ENCODE measurements at regions of chr11 and their contacts with region 1.

Region 1: DNA sequence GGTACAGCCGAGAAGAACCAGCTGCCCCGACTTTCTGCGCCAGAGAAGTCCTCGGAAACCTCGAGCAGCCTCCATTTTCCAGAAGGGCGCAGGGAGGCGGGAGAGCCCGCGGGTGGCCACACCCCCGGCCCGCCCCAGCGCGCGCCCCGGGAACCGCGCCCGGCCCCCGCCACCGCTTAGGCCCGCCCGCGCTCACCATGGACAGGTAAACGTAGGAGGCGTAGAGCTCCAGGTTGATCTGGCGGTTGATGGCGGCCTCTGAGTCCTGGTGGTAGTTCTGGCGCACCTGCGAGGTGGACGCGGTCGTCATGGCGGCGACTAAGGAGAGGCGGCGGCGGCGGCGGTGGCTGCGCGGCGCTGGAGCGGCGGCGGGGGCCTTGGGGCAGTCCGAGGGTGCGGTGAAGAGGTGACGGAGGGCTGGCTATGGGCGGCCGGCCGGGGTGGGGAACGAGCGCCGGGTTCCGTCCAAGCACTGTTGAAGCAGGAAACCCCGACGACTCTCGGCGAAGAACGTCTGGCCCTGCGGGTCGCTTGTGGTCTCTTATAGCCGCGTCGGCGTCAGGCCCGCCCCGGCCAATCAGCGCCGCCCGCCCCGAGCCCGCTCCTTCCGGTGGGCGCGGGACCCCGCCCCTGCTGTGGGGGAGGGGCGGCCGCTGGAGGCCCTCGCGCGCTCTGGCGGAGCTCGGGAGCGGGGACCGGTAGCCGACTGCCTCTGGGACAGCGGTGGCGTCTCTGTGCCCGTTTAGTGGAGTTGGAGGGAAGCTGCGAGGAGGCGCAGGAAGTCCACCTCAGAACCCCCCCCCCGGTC is at the start of gene FTH1:
- DNase-seq: peak; percentile 89
- H3K4me3 ChIP-seq: peak within 1 kb of the TSS; percentile 98 to 99 (median 99)
- H3K27ac ChIP-seq: peak within 1 kb of the TSS; percentile 60
- H3K4me1 ChIP-seq: peaks cover 63% of the 10 kb centered on the region
- H3K27me3 ChIP-seq: no peaks in the 10 kb centered on the region
- CTCF ChIP-seq: no peak
- POLR2A ChIP-seq: peak; percentile 97
- total RNA-seq, gene FTH1: 2,371 and 2,501 TPM in 2 replicates

Region 2: GRCh38 chr11:61516675-61517572 is 450.4 kb before region 1 on chr11:
- CTCF ChIA-PET with region 1: no interaction called
- POLR2A ChIA-PET with region 1: no interaction called
- dilution Hi-C with region 1: no loop called
- intact Hi-C with region 1: no loop called
- DNase-seq: peak; percentile 42
- H3K4me3 ChIP-seq: no peak overlapping the region
- H3K27ac ChIP-seq: no peak overlapping the region
- H3K4me1 ChIP-seq: peaks cover 4% of the 10 kb centered on the region
- H3K27me3 ChIP-seq: no peaks in the 10 kb centered on the region
- CTCF ChIP-seq: peak; percentile 96 to 97
- POLR2A ChIP-seq: no peak

Region 3: DNA sequence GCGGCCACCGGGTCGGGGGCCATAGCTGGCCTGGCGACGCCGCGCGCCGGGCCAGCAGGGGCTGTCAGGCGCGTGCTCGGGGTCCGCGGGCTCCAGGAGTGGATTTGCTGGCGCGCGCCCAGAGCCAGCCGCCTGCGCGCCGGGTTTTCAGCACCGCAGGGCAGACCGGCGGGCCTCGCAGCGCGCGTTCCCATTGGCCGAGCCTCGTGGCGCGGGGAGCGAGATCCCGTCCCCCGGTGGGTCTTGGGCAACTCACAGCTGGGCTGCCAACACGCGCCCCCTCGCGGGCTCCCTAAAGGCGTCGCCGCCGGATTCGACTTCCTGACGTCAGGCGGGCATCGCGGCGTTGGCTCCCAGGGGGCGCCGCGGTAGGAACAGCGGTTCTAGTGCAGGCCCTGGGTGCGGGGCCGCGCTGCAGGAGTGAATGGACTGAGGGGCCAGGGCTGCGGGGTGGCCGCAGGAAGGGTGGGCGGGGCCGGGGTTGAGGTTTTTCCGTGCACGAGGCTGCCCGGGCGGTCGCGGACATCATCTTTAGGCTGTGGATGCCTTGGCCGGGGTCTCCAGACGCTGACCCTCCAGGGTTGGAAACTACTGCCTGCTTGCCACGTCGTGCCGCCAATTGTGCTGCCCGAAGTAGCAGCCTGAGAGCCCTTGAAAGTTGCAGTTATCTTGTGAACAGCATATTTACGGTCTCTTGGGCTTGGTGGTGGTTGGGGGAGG is 150.4 kb before region 1 on chr11 and contains the start of gene FADS1:
- CTCF ChIA-PET with region 1: no interaction called
- POLR2A ChIA-PET with region 1: no interaction called
- dilution Hi-C with region 1: no loop called
- intact Hi-C with region 1: loop called (anchors 5 kb)
- DNase-seq: peak; percentile 97
- H3K4me3 ChIP-seq: peak within 1 kb of the TSS; percentile 56 to 86 (median 62)
- H3K27ac ChIP-seq: peak within 1 kb of the TSS; percentile 86
- H3K4me1 ChIP-seq: peaks cover 19% of the 10 kb centered on the region
- H3K27me3 ChIP-seq: no peaks in the 10 kb centered on the region
- CTCF ChIP-seq: peak; percentile 79 to 89
- POLR2A ChIP-seq: peak; percentile 50
- total RNA-seq, gene FADS1: 109 and 110 TPM in 2 replicates

Region 4: DNA sequence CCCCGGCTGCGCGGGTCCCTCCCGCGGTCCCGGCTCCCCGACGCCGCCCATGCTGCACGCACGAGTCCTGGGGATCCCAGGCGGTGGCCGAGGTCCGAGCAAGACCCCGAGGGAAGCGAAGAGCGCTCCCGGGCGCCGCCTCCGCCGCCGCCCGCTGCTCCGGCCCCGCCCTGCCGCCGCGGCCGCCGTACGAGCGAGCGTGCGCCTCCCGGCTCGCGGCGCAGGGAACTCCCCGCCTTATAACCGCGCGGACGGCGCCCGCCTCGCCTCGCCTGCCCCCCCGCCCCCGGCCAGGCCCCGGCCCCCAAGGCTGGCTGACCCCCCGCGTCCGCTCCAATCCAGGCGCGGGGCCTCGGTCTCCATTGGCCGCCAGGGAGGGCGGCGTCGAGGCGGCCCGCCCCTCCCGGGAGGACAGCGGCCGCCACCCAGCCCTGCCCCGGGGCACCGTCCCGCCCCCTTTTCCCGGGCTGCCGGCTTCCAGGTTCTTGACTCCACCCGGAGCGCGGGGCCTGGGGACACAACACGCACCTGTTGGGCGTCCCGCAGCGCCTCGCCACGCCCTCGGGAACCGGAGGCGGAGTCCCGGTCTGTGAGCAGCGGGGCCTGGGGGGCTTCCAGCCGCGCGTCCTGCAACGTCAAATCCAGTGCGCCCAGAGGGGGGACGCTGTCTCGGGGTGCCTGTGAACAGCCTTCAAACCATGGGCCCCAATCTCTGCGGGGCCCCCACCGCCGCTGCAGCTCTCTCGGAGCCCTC is 75.8 kb before region 1 on chr11 and contains the start of gene FADS3:
- CTCF ChIA-PET with region 1: interaction called, 23 read pairs
- POLR2A ChIA-PET with region 1: no interaction called
- dilution Hi-C with region 1: no loop called
- intact Hi-C with region 1: loop called (anchors 1 kb)
- DNase-seq: peak; percentile 81
- H3K4me3 ChIP-seq: peak within 1 kb of the TSS; percentile 41 to 70 (median 70)
- H3K27ac ChIP-seq: peak within 1 kb of the TSS; percentile 58
- H3K4me1 ChIP-seq: peaks cover 32% of the 10 kb centered on the region
- H3K27me3 ChIP-seq: no peaks in the 10 kb centered on the region
- CTCF ChIP-seq: no peak
- POLR2A ChIP-seq: peak; percentile 78
- total RNA-seq, gene FADS3: 204 and 216 TPM in 2 replicates

Region 5: GRCh38 chr11:61978703-61979661 is 11.7 kb after region 1 on chr11:
- CTCF ChIA-PET with region 1: interaction called, 5 read pairs
- POLR2A ChIA-PET with region 1: interaction called, 18 read pairs
- dilution Hi-C with region 1: no loop called
- intact Hi-C with region 1: no loop called
- DNase-seq: peak; percentile 87
- H3K4me3 ChIP-seq: no peak overlapping the region
- H3K27ac ChIP-seq: peak overlapping the region; percentile 55
- H3K4me1 ChIP-seq: peaks cover 22% of the 10 kb centered on the region
- H3K27me3 ChIP-seq: no peaks in the 10 kb centered on the region
- CTCF ChIP-seq: no peak
- POLR2A ChIP-seq: no peak

Region 6: GRCh38 chr11:62025487-62026105 is 58.3 kb after region 1 on chr11:
- CTCF ChIA-PET with region 1: interaction called, 8 read pairs
- POLR2A ChIA-PET with region 1: interaction called, 8 read pairs
- dilution Hi-C with region 1: no loop called
- intact Hi-C with region 1: loop called (anchors 1 kb)
- DNase-seq: peak; percentile 94
- H3K4me3 ChIP-seq: no peak overlapping the region
- H3K27ac ChIP-seq: peak overlapping the region; percentile 69
- H3K4me1 ChIP-seq: peaks cover 15% of the 10 kb centered on the region
- H3K27me3 ChIP-seq: no peaks in the 10 kb centered on the region
- CTCF ChIP-seq: no peak
- POLR2A ChIP-seq: no peak

Region 7: DNA sequence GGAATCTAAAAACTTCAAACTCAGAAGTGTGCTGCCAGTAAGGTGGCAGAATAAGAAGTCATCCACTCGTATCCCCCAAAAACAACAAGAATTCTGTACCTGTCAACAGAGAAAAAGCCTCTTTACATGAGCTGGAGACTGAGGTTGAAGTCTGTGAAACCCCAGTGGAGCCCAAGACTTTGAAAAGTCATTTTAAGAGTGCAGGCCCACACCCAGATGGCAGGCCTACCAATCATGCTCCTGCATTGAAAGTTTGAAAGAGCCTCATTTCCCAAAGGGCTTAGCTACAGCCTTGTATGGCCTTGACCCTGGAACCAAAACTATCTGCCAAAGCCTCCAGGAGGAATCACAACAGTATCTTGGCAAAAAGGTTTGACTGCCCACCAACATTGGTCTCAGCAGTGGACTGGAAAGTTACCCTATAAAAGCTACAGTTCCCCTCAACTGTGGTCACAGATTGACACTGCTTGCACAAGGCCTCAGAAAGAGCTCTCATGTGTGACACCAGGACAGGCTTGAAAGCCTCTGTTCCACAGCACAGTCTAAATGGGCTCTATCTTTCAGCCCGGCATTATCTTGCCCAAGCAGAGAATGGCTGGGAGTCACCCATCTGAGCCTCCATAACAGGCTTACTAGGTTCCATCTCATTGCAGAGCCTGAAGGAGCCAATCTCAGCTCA is 1450.0 kb after region 1 on chr11:
- CTCF ChIA-PET with region 1: no interaction called
- POLR2A ChIA-PET with region 1: no interaction called
- dilution Hi-C with region 1: no loop called
- intact Hi-C with region 1: no loop called
- DNase-seq: no peak
- H3K4me3 ChIP-seq: no peak overlapping the region
- H3K27ac ChIP-seq: no peak overlapping the region
- H3K4me1 ChIP-seq: no peaks in the 10 kb centered on the region
- H3K27me3 ChIP-seq: no peaks in the 10 kb centered on the region
- CTCF ChIP-seq: no peak
- POLR2A ChIP-seq: no peak

Measured in endothelial cell of umbilical vein (primary cell).